Activated CD4-positive, alpha-beta memory T cell treated with anti-CD3 and anti-CD28 coated beads, Interleukin-2, amount 10 ng/mL, durations not matched to agents 7 days and 5 days (primary cell): ENCODE measurements at regions of chr1 and their contacts with region 1.

Region 1: GRCh38 chr1:46487818-46488218 is 1.8 kb upstream of the DMBX1 start:
- DNase-seq: no peak
- H3K4me3 Mint-ChIP-seq: no peak overlapping the region
- H3K27ac Mint-ChIP-seq: no peak overlapping the region
- H3K4me1 Mint-ChIP-seq: peaks cover 22% of the 10 kb centered on the region
- H3K27me3 Mint-ChIP-seq: peaks cover 90% of the 10 kb centered on the region

Region 2: DNA sequence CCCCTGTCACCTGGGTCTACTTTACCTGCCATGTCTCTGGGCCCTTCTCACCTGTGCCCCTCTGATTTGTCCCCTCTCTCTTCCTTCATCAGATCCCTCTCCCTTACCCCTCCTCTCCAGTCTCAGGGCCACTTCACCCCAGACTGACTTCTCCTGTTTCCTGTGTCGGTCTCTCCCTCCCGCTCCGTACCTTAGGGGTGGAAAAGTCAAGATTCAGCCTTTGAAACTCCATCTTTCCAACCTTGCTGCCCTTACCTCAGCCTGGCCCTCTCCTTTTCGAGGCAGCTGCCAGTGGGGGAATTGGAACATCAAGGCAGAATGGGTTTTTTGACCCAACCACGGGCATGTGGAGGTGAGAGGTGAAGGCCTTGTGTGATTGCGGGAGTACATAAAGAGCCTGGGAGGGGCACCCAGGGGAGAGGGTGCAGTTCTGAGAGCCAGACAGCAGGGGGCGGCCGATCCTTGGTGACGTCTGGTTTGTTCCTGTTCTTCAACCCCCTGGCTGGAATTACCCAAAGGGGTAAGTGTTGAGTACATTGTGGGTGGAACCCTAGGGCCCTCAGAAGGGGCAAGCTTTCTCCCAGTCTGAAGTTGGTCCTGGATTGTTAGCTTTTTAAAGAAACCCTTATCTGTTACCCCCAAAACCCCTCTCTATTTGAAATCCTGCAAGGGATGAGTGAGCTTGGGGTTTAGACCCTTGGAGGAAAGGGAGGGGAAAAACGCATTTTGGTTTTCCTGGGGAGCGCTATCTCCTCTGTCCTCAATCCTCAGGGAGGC is 10.5 kb before region 1 on chr1:
- CTCF ChIA-PET with region 1: interaction called, 13 read pairs
- POLR2A ChIA-PET with region 1: no interaction called
- DNase-seq: peak; percentile 79
- H3K4me3 Mint-ChIP-seq: no peak overlapping the region
- H3K27ac Mint-ChIP-seq: no peak overlapping the region
- H3K4me1 Mint-ChIP-seq: no peaks in the 10 kb centered on the region
- H3K27me3 Mint-ChIP-seq: peaks cover 41% of the 10 kb centered on the region